ENCODE measurements at regions of chr16 and their contacts with region 1.

Region 1: GRCh38 chr16:84754353-84754856 is 54.6 kb downstream of the USP10 start:
- DNase-seq: peak; percentile 67 to 93
- H3K4me3 ChIP-seq: no peak overlapping the region
- H3K27ac ChIP-seq: peak overlapping the region in 3 of 5 donors; percentile 46 to 74 (median 60)
- H3K4me1 ChIP-seq: peaks cover 7 to 81% (median 42%) of the 10 kb centered on the region in 4 donors
- H3K27me3 ChIP-seq: no peaks in the 10 kb centered on the region
- CTCF ChIP-seq: peak in 6 of 7 experiments; percentile 36 to 92 (median 84)
- EP300 ChIP-seq: no peak
- POLR2A ChIP-seq: no peak

Region 2: DNA sequence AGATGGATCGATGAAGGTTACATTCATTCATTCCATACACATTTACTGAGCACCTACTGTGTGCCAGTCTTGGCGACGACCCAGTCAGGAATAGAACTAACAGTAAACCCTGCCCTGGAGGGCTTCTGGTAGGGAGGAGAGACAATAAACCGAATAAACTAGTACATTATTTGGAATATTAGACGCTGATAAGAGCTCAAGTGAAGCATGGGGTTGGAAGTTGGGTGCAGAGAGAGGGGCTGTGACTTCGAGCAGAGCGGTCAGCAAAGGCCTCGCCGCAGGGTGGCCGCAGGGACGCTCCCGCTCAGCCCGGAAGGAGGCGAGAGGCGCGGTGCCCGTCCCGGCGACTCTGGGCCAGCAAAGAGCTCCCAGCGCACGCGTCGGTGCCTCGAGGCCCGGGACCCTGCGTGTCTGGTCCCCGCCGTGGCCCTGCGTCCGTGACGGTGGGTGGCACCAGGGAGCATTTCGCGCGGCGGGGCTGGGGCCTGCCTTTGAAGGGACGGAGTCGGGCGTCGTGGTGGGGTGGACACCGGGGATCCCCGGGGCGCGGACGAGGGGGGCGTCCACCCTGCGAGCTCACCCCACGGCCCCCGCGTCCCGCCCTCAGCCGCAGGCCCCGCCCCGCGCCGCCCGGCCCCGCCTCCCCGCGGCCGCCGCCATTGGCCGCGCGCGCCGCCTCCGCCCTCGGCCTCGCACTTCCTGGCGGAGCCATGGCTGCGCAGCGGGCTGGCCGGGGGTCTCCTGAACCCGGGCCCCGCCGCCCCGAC is 106.4 kb before region 1 on chr16 and contains the start of gene KLHL36:
- intact Hi-C with region 1: no loop called
- DNase-seq: peak; percentile 66 to 84
- H3K4me3 ChIP-seq: peak within 1 kb of the TSS; percentile 71 to 83 (median 77)
- H3K27ac ChIP-seq: peak within 1 kb of the TSS; percentile 79 to 97 (median 89)
- H3K4me1 ChIP-seq: peaks cover 14 to 44% (median 37%) of the 10 kb centered on the region in 4 donors
- H3K27me3 ChIP-seq: no peaks in the 10 kb centered on the region
- CTCF ChIP-seq: no peak
- EP300 ChIP-seq: no peak
- POLR2A ChIP-seq: no peak
- total RNA-seq, gene KLHL36: 29.5 to 62.4 (median 43.7) TPM

Region 3: GRCh38 chr16:84952335-84953189 is 198.2 kb after region 1 on chr16:
- intact Hi-C with region 1: loop called (anchors 5 kb)
- DNase-seq: peak; percentile 85 to 94
- H3K4me3 ChIP-seq: no peak overlapping the region
- H3K27ac ChIP-seq: peak overlapping the region in 4 of 5 donors; percentile 4 to 76 (median 62)
- H3K4me1 ChIP-seq: peaks cover 9 to 33% (median 19%) of the 10 kb centered on the region in 4 donors
- H3K27me3 ChIP-seq: no peaks in the 10 kb centered on the region
- CTCF ChIP-seq: peak in 5 of 7 experiments; percentile 89 to 95 (median 92)
- EP300 ChIP-seq: no peak
- POLR2A ChIP-seq: no peak